Calu3 (cell line): ENCODE measurements at regions of chrX and their contacts with region 1.

Region 1: DNA sequence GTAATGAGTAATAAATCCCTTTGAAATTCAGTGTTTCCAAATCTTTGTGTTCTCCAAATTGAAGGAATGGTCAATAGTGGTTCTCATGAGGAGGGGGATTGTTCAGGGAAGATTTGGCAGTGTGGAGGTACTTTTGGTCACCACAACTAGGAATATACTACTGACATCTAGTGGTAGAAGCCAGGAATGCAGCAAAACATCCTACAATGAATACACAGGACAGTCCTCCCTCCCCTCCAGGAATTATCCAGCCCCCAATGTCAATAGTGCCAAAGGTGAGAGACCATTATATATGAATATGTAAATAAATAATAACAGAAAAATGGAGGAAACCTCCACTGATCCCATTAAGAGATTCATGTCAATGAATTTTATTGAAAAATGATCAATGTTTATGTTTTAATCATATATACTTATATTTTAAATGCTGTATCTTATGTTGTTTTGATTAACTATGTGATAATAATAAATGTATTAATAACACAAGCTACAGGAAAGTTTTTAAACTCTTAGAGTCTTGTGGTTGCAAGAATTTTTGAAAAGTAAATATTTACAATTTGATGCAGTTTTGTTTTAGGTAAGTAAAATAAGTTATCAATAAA is 14.4 kb upstream of the FAM9A start:
- DNase-seq: peak; percentile 45
- H3K4me3 Mint-ChIP-seq: no peak overlapping the region
- H3K27ac Mint-ChIP-seq: no peak overlapping the region
- H3K4me1 Mint-ChIP-seq: no peaks in the 10 kb centered on the region
- H3K27me3 Mint-ChIP-seq: peaks cover 5% of the 10 kb centered on the region
- CTCF ChIP-seq: peak; percentile 43

Region 2: GRCh38 chrX:7996414-7996813 is 819.2 kb before region 1 on chrX:
- CTCF ChIA-PET with region 1: no interaction called
- intact Hi-C with region 1: loop called (anchors 1 kb)
- DNase-seq: peak; percentile 10
- H3K4me3 Mint-ChIP-seq: no peak overlapping the region
- H3K27ac Mint-ChIP-seq: no peak overlapping the region
- H3K4me1 Mint-ChIP-seq: no peaks in the 10 kb centered on the region
- H3K27me3 Mint-ChIP-seq: no peaks in the 10 kb centered on the region
- CTCF ChIP-seq: no peak

Region 3: DNA sequence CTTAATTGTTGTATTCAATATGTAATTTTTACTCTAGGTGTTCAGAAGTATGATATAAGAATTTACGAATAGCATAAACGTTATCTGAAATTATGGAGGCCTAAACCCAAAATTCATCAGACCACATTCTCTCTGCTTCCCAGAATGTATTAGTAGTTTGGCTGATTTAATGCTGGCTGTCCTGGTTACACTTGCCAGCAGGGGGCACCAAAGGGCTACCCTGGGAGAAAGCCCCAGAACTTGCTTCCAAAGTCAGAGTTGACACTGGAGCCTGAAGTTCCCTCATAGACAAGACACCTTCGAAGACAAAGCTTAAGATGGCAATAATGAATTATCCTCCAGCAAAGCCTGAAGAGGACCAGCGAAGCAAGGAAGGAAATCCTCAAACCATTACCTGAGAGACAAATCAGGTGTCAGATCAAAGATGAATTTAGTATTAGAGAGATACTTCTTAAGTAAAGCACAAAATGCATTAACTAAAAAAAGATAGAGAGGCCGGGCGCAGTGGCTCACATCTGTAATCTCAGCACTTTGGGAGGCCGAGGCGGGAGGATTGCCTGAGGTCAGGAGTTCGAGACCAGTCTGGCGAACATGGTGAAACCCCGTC is 72.3 kb before region 1 on chrX:
- CTCF ChIA-PET with region 1: no interaction called
- intact Hi-C with region 1: loop called (anchors 1 kb)
- DNase-seq: peak; percentile 76
- H3K4me3 Mint-ChIP-seq: no peak overlapping the region
- H3K27ac Mint-ChIP-seq: no peak overlapping the region
- H3K4me1 Mint-ChIP-seq: no peaks in the 10 kb centered on the region
- H3K27me3 Mint-ChIP-seq: peaks cover 30% of the 10 kb centered on the region
- CTCF ChIP-seq: peak; percentile 77

Region 4: DNA sequence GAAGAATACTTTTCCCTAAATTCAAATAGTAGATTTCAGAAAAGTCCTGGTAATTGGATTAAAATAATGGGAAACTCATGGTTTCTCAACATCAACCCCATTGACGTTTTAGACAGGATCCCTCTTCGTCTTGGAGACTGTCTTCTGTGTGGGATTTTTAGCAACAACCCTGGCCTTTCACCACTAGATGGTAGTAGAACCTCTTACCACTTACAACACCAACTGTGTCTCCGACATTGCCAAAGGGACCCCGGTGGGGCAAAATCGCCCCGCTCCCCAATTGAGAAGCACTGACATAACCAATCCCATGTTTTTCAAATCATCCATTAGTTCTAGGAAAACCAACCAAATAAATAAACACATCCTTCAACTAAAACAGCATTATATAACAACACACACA is 66.7 kb before region 1 on chrX:
- CTCF ChIA-PET with region 1: no interaction called
- intact Hi-C with region 1: loop called (anchors 1 kb)
- DNase-seq: peak; percentile 7
- H3K4me3 Mint-ChIP-seq: no peak overlapping the region
- H3K27ac Mint-ChIP-seq: no peak overlapping the region
- H3K4me1 Mint-ChIP-seq: peaks cover 10% of the 10 kb centered on the region
- H3K27me3 Mint-ChIP-seq: peaks cover 35% of the 10 kb centered on the region
- CTCF ChIP-seq: peak; percentile 15

Region 5: GRCh38 chrX:8906299-8906938 is 90.9 kb after region 1 on chrX:
- CTCF ChIA-PET with region 1: no interaction called
- intact Hi-C with region 1: no loop called
- DNase-seq: no peak
- H3K4me3 Mint-ChIP-seq: no peak overlapping the region
- H3K27ac Mint-ChIP-seq: no peak overlapping the region
- H3K4me1 Mint-ChIP-seq: no peaks in the 10 kb centered on the region
- H3K27me3 Mint-ChIP-seq: peaks cover 15% of the 10 kb centered on the region
- CTCF ChIP-seq: no peak

Region 6: DNA sequence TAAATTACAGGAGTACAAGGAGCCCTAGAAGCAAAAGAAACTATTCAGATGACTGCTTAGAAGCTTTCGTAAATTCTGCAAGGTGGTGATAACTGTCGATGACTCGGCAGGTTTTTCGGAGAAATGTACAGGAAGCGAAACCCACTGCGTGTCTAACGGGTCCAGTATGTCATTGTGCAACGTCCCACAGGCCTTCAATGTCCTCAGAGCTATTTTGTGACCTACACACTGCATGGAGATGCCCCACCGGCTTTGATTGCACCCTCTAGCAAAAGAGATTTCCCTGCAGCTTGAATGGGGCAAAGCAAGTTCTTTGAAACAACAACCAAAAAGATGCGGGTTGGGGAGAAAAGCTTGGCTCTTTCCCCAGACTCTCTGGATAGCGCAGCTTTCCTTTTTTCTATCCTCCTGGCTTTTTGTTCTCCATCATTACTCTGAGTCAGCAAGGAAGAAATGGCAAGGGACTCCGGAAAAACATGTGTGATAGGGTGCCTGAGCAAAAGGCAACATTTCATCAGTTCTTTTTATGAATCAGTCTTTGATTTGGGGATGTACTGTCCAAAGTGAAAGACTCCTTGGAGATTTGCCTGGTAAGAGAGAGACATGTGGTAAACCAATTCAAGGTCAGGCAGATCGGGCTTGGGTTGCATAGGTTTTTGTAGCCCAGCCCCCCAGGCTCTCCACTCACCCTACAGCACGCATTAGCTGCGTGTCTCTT is 537.3 kb after region 1 on chrX:
- CTCF ChIA-PET with region 1: no interaction called
- intact Hi-C with region 1: loop called (anchors 5 kb)
- DNase-seq: no peak
- H3K4me3 Mint-ChIP-seq: peak overlapping the region; percentile 15
- H3K27ac Mint-ChIP-seq: peak overlapping the region; percentile 93
- H3K4me1 Mint-ChIP-seq: peaks cover 29% of the 10 kb centered on the region
- H3K27me3 Mint-ChIP-seq: no peaks in the 10 kb centered on the region
- CTCF ChIP-seq: no peak

Region 7: GRCh38 chrX:9708904-9709553 is 893.5 kb after region 1 on chrX:
- CTCF ChIA-PET with region 1: no interaction called
- intact Hi-C with region 1: loop called (anchors 2 kb)
- DNase-seq: peak; percentile 74
- H3K4me3 Mint-ChIP-seq: peak overlapping the region; percentile 32
- H3K27ac Mint-ChIP-seq: peak overlapping the region; percentile 83
- H3K4me1 Mint-ChIP-seq: peaks cover 14% of the 10 kb centered on the region
- H3K27me3 Mint-ChIP-seq: no peaks in the 10 kb centered on the region
- CTCF ChIP-seq: peak; percentile 78

Region 8: DNA sequence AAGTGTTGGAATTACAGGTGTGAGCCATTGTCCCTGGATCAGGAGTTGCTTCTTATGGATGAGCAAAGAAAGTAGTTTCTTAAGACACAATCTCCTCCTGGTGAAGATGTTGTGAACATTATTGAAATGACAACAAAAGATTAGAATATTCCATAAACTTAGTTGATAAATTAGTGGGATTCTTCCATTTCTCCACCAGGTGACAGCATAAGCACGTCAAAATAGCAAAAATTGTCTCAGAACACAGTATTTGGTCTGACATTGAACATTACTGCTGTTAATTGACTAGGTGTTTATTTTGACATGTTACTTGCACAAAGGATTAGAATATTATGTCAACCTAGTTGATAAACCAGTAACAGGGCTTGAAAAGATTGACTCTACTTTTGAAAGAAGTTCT is 1173.2 kb after region 1 on chrX:
- CTCF ChIA-PET with region 1: no interaction called
- intact Hi-C with region 1: loop called (anchors 10 kb)
- DNase-seq: no peak
- H3K4me3 Mint-ChIP-seq: no peak overlapping the region
- H3K27ac Mint-ChIP-seq: no peak overlapping the region
- H3K4me1 Mint-ChIP-seq: no peaks in the 10 kb centered on the region
- H3K27me3 Mint-ChIP-seq: no peaks in the 10 kb centered on the region
- CTCF ChIP-seq: peak; percentile 42